Posterior cingulate gyrus (tissue), 11 donors: ENCODE measurements at regions of chr22 and their contacts with region 1.

Region 1: GRCh38 chr22:32411829-32412592 is at the start of gene RTCB:
- DNase-seq: peak; percentile 85 to 99 (median 92)

Region 2: DNA sequence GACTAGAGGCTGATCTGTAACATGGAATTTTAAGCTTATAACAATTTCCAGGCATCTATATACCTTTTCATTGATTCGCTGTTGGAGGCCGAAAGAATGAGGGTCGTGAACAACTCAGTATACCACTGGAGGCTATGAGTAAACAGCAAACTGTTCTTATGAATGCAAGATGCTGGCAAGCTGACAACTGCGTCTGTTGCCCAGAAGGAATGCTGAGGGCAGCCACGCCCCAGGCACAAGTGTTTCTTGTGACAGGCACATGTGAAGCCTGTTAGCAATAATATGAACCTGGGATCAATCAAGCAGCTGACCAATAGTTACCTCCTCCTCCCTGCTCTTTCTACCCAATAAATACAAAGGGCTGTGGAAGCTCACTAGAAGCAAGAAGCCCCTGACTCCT is 15.3 kb before region 1 on chr22:
- intact Hi-C with region 1: no loop called
- DNase-seq: no peak

Region 3: GRCh38 chr22:32444068-32444467 is 32.1 kb after region 1 on chr22:
- intact Hi-C with region 1: no loop called
- DNase-seq: no peak

Region 4: GRCh38 chr22:32474635-32475467 is 62.8 kb after region 1 on chr22 and contains the start of gene FBXO7:
- intact Hi-C with region 1: loop called (anchors 1 kb)
- DNase-seq: peak; percentile 86 to 99 (median 92)